ENCODE measurements at regions of chr2 and their contacts with region 1.

Region 1: DNA sequence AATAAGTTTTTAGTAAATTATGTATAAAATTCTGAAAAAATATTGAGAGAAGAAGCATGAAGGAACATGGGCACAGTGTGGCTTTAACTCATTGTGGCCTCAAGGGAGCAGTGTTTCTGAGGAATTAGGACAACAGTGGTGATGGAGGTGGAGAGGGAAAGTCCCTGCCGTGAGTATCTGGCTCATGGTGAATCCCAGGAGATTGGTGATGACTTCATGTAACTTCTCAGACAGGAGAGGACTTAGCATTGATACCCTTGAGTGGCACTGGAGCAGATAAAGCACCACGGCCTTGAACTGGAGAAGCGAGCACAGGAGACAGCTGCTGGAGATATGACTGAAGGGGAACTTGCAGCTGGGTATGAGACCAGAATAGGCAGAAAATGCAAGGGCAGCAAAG is 35.0 kb upstream of the LRP1B start:
- DNase-seq: no peak
- ATAC-seq: peak; percentile 95
- H3K4me3 Mint-ChIP-seq: no peak overlapping the region
- H3K27ac Mint-ChIP-seq: no peak overlapping the region
- H3K4me1 Mint-ChIP-seq: no peaks in the 10 kb centered on the region
- H3K27me3 Mint-ChIP-seq: no peaks in the 10 kb centered on the region
- CTCF ChIP-seq: no peak

Region 2: DNA sequence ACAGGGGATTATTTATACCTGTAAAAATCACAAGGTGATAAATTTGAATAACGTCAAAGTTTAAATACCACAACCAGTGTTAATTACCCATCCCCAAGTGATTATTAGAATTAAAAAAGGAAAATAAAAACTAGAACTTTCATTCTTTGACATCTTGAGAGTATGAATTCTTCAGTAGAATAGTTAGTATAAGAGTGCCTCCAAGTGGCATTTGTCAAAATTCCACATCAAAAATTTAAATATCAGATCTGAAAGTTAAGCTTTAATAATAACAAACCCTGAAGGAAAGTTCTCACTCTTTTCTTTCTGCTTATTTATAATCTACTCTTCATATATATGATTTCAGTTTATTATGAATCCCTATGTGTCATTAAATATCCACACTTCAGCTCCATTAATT is 438.0 kb after region 1 on chr2:
- CTCF ChIA-PET with region 1: no interaction called
- POLR2A ChIA-PET with region 1: no interaction called
- intact Hi-C with region 1: loop called (anchors 1 kb)
- DNase-seq: no peak
- ATAC-seq: no peak
- H3K4me3 Mint-ChIP-seq: no peak overlapping the region
- H3K27ac Mint-ChIP-seq: no peak overlapping the region
- H3K4me1 Mint-ChIP-seq: no peaks in the 10 kb centered on the region
- H3K27me3 Mint-ChIP-seq: no peaks in the 10 kb centered on the region
- CTCF ChIP-seq: no peak

Region 3: DNA sequence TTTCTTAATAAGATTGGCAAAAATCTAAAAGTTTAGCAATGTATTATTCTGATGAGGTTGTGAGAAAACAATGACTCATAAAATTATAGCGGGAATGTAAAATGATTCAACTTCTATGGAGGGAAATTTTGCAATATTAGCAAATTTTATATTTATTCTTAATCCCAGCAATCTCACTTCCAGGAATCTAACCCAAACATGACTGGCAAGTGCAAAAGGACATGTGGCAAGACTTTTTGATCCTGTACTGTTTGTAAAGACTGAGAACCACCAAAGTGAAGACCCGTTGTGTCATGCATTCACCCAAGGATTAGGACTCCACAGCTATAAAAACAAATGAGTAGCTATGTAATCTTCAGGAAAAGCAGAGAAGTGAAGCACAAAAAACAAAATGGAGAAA is 476.9 kb after region 1 on chr2:
- CTCF ChIA-PET with region 1: no interaction called
- POLR2A ChIA-PET with region 1: no interaction called
- intact Hi-C with region 1: loop called (anchors 2 kb)
- DNase-seq: no peak
- ATAC-seq: no peak
- H3K4me3 Mint-ChIP-seq: no peak overlapping the region
- H3K27ac Mint-ChIP-seq: no peak overlapping the region
- H3K4me1 Mint-ChIP-seq: no peaks in the 10 kb centered on the region
- H3K27me3 Mint-ChIP-seq: no peaks in the 10 kb centered on the region
- CTCF ChIP-seq: no peak

Region 4: GRCh38 chr2:142989273-142990204 is 823.7 kb after region 1 on chr2:
- CTCF ChIA-PET with region 1: no interaction called
- POLR2A ChIA-PET with region 1: no interaction called
- intact Hi-C with region 1: loop called (anchors 10 kb)
- DNase-seq: no peak
- ATAC-seq: peak; percentile 28
- H3K4me3 Mint-ChIP-seq: no peak overlapping the region
- H3K27ac Mint-ChIP-seq: no peak overlapping the region
- H3K4me1 Mint-ChIP-seq: peaks cover 5% of the 10 kb centered on the region
- H3K27me3 Mint-ChIP-seq: no peaks in the 10 kb centered on the region
- CTCF ChIP-seq: peak; percentile 92

Measured in activated B cell treated with CpG ODN at 0.5 μM for 24 hours (primary cell).